ENCODE measurements at regions of chr12 and their contacts with region 1.

Region 1: DNA sequence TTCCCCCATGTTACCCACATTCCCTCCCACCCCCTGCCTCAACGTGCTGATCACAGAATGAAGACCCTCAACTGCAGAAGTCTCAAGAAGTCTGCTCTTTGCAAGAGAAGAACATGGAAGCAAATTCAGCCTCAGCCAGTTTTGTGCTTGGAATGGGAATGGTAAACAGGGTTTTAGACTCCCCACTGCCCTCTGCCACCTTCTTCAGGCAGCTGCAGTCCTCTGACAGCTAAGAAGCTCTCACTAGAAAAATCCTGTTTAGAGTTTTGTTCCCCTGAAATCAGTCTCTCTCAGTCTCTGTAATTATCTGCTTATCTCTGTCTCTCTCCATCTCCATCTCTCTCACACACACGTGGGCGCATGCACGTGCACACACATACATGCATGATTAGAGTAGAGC is 85.4 kb downstream of the CRACR2A start:
- DNase-seq: no peak
- H3K4me3 ChIP-seq: no peak overlapping the region
- H3K27ac ChIP-seq: no peak overlapping the region
- H3K4me1 ChIP-seq: 0 out of 7 replicates have a peak, but pooled peaks cover 0 to 2% (median 0%) of the 10 kb centered on the region in 4 experiments
- H3K27me3 ChIP-seq: no peaks in the 10 kb centered on the region
- CTCF ChIP-seq: peak; percentile 13 to 52 (median 44)
- EP300 ChIP-seq: no peak
- POLR2A ChIP-seq: no peak
- RAD21 ChIP-seq: peak in 1 of 2 experiments; percentile 50; a peak in 3 of 4 replicates

Region 2: DNA sequence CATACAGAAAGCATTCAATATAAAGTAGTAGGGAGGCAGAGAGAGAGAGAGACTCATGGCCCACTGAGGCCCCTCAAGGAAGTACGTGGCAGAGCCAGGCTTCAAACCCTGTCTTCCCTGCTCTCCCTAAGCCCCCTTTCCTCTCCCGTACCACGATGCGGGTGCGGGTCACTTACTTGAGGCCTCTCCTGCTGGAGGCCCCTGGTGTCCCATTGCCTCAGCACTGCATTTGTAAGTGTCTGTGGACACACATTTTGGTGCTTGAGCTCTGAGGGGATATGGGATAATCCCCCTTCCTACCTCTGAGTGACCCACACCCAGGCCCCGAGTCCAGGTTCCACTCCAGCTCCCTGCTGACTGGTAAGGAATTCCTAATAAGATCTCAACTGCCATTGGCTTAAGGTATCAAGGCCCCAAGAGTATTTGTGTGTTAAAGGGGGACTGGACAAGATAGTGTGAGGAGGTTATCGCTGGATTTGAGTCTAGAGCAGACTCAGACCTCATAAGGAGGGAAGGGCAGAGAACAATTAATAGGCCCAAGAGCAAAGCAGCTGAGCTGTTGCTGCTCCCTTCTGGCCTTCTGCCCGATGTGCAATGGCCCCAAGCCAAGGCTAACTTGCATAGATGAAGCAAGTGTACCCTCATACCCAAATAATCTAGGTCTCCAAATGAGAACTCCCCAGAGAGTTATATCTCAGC is 13.6 kb after region 1 on chr12:
- CTCF ChIA-PET with region 1: interaction called, 39 read pairs
- POLR2A ChIA-PET with region 1: no interaction called
- DNase-seq: peak in 1 of 2 experiments; percentile 41
- H3K4me3 ChIP-seq: no peak overlapping the region
- H3K27ac ChIP-seq: no peak overlapping the region
- H3K4me1 ChIP-seq: no peaks in the 10 kb centered on the region
- H3K27me3 ChIP-seq: no peaks in the 10 kb centered on the region
- CTCF ChIP-seq: peak; percentile 34 to 52 (median 44); a peak in 3 of 4 replicates
- EP300 ChIP-seq: no peak
- POLR2A ChIP-seq: no peak
- RAD21 ChIP-seq: peak; percentile 63 to 72